AG04449 (cell line): ENCODE measurements at regions of chr17 and their contacts with region 1.

Region 1: DNA sequence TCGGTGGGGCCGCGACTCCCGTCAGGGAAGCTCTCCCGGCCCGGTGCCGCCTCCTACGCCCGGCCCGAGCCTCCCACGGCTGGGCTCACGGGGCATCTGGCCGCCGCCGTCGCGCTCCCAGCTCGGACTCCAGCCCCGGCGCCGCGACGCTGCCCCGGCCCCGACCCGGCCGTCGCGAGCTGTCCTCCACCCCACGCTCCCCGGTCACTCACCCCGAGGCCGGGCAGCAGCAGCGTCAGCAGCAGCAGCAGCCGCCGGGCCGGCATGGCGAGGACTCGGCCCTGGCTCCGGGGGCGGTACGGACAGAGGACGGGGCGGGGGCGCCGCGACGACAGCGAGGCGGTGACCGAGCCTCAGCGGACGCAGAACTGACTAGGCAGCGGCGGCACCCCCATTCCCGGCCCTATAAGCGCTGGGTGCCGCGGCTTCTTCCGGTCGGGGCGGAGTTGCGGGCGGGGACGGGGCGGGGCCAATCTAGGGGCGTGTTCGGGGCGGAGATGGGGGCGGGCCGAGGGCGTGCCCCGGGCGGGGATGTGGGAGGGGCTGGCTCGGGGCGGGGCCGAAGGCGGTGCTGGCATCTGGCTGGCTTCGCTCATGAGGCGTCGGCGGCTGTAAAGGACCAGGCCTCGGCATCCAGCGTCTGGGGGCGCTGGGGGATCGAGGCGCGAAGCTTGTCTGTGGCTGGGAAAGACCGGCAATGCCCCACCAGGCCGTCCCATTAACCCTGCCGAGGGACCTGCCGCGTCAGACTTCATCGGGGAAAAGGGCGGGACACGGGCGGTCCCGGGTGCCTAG is at the start of gene ERN1:
- DNase-seq: peak; percentile 56
- H3K4me3 ChIP-seq: peak within 1 kb of the TSS; percentile 64
- CTCF ChIP-seq: no peak

Region 2: GRCh38 chr17:63904316-63904715 is 225.6 kb before region 1 on chr17:
- CTCF ChIA-PET with region 1: interaction called, 44 read pairs
- POLR2A ChIA-PET with region 1: no interaction called
- DNase-seq: no peak
- H3K4me3 ChIP-seq: no peak overlapping the region
- CTCF ChIP-seq: no peak

Region 3: GRCh38 chr17:64020056-64020766 is 109.8 kb before region 1 on chr17 and contains the start of gene ICAM2:
- CTCF ChIA-PET with region 1: interaction called, 1,118 read pairs
- POLR2A ChIA-PET with region 1: no interaction called
- DNase-seq: no peak
- H3K4me3 ChIP-seq: peak within 1 kb of the TSS; percentile 20; the same call in 1 of the 2 replicates
- CTCF ChIP-seq: no peak

Region 4: DNA sequence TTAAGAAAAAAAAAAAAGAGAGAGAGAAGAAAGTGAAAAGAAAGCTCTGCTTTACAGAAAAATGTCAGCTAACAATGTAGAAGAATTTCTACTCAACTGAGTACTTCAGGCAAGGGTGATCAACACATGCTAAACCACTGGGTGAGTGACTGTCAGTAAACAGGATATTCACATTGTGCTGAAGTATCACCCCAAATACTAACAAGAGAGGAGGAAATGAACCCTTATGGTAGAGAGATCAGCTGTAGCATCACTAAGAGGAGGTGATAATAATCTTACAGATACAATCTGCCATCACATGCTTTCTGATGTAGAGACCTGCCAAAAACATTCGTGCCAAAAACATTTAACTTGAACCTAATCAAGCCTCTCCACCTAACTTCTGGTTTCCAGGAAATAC is 78.8 kb before region 1 on chr17:
- CTCF ChIA-PET with region 1: interaction called, 29 read pairs
- POLR2A ChIA-PET with region 1: no interaction called
- DNase-seq: no peak
- H3K4me3 ChIP-seq: no peak overlapping the region
- CTCF ChIP-seq: no peak

Region 5: DNA sequence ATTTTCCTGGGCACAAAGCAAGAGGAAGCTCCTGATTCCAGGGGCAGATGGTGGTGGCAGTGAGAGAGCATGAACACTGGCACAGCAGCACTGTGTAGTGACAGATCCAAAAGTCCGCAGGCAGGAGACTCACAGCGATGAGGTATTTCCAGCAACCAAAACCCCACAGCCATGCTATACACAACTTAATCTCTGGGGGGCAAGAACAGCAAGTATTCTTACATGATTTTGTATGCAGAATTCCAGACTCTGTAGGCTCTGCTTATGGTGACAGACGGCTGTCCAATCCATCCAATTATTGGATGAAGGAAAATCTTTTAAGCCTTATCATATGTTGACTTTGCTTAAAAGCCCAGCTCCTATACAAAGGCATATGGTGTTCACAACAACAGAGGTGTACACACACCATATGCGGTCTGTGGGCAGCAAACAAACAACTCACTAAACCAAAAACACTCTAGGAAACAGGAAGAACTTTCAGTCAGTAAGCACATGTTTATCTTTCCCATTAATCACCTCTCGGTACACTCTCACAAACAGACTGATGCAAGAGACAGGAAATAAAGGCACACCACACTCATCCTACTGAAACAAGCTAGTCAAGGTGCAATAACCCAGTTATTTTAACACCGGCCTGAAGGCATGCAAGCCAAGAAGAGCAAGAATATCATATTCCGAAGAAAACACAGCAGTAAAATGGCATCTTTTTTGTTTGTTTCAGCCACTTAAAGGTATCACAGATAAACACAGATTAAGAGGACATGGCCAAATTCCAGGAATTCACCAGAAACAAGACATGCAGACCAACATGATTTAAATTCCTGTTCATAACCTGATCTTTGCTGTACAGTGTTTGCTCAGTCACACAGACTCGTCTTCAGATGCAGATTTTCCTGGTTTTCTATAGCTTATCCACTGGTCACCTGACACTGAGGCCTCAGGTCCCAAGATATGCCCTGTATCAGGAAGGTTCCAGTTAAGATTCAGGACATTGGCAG is 47.9 kb before region 1 on chr17:
- CTCF ChIA-PET with region 1: interaction called, 14 read pairs
- POLR2A ChIA-PET with region 1: interaction called, 7 read pairs
- DNase-seq: no peak
- H3K4me3 ChIP-seq: no peak overlapping the region
- CTCF ChIP-seq: no peak

Region 6: DNA sequence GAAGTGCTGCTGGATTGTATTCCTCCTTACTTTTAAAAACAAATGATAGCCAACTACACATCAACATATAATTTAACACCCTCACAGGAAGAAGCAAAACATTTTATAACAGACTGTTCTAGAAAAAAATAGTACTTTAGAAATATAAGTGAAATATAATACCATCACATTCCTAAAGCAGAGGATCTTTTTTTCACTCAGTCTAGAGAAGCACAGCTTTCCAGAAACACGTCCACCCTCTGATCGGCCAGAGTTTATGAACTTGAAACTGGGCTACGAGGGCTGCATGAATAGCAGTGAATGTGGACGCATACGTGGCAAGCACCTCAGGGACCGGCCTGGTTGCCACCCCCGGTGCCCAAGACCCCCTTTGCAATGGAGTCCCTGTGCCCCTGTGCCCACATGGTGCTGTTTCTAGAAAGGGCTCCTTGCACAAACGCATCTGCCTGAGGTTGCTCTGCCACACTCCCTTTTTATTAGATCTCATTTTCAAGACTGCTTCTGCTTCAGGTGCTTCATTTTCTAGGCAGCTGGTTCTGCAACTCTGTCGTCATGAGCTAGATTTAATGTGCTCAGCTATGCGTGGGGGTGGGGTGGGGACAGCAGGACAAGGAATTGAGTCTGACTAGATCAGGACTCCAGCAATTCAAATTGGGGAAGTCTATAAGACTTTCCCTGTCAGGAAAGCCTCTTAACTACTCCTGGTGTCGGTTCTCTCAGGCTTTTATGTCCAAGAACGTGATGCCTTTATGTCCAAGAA is 29.1 kb after region 1 on chr17:
- CTCF ChIA-PET with region 1: interaction called, 11 read pairs
- POLR2A ChIA-PET with region 1: no interaction called
- DNase-seq: no peak
- H3K4me3 ChIP-seq: no peak overlapping the region
- CTCF ChIP-seq: no peak

Region 7: GRCh38 chr17:64418506-64419339 is 288.8 kb after region 1 on chr17:
- CTCF ChIA-PET with region 1: no interaction called
- POLR2A ChIA-PET with region 1: no interaction called
- DNase-seq: peak; percentile 26
- H3K4me3 ChIP-seq: no peak overlapping the region
- CTCF ChIP-seq: peak; percentile 56